ENCODE measurements at regions of chr9 and their contacts with region 1.

Region 1: GRCh38 chr9:35636135-35636876 is 14.4 kb downstream of the SIT1 start:
- DNase-seq: no peak
- H3K4me3 Mint-ChIP-seq: no peak overlapping the region
- H3K27ac Mint-ChIP-seq: no peak overlapping the region
- H3K4me1 Mint-ChIP-seq: peaks cover 46% of the 10 kb centered on the region
- H3K27me3 Mint-ChIP-seq: no peaks in the 10 kb centered on the region

Region 2: GRCh38 chr9:35611230-35611797 is 25.0 kb before region 1 on chr9:
- CTCF ChIA-PET with region 1: interaction called, 11 read pairs
- intact Hi-C with region 1: no loop called
- DNase-seq: peak; percentile 67
- H3K4me3 Mint-ChIP-seq: no peak overlapping the region
- H3K27ac Mint-ChIP-seq: no peak overlapping the region
- H3K4me1 Mint-ChIP-seq: peaks cover 11% of the 10 kb centered on the region
- H3K27me3 Mint-ChIP-seq: no peaks in the 10 kb centered on the region

Region 3: GRCh38 chr9:35616681-35617459 is 19.4 kb before region 1 on chr9:
- CTCF ChIA-PET with region 1: interaction called, 11 read pairs
- intact Hi-C with region 1: loop called (anchors 2 kb)
- DNase-seq: peak; percentile 79
- H3K4me3 Mint-ChIP-seq: peak overlapping the region; percentile 79
- H3K27ac Mint-ChIP-seq: peak overlapping the region; percentile 47
- H3K4me1 Mint-ChIP-seq: peaks cover 28% of the 10 kb centered on the region
- H3K27me3 Mint-ChIP-seq: no peaks in the 10 kb centered on the region